Thyroid gland (tissue), 4 donors: ENCODE measurements at regions of chr13 and their contacts with region 1.

Region 1: GRCh38 chr13:110915057-110915873 is at the start of gene ANKRD10:
- DNase-seq: peak; percentile 99
- H3K4me3 ChIP-seq: peak within 1 kb of the TSS; percentile 89 to 100 (median 95)
- H3K27ac ChIP-seq: peak within 1 kb of the TSS; percentile 98 to 99 (median 99)
- H3K4me1 ChIP-seq: peaks cover 14 to 32% of the 10 kb centered on the region in 2 donors
- H3K27me3 ChIP-seq: no peaks in the 10 kb centered on the region
- CTCF ChIP-seq: peak; percentile 68 to 94 (median 88)
- POLR2A ChIP-seq: peak in 1 of 2 donors; percentile 62
- total RNA-seq, gene ANKRD10: 105 to 168 (median 135) TPM

Region 2: GRCh38 chr13:110715395-110716235 is 199.7 kb before region 1 on chr13:
- intact Hi-C with region 1: loop called (anchors 10 kb)
- DNase-seq: peak; percentile 99
- H3K4me3 ChIP-seq: peak overlapping the region; percentile 59 to 83 (median 79)
- H3K27ac ChIP-seq: peak overlapping the region; percentile 97 to 100 (median 99)
- H3K4me1 ChIP-seq: peaks cover 17 to 18% of the 10 kb centered on the region in 2 donors
- H3K27me3 ChIP-seq: no peaks in the 10 kb centered on the region
- CTCF ChIP-seq: peak in 2 of 6 experiments; percentile 2 to 26
- POLR2A ChIP-seq: peak; percentile 25 to 53

Region 3: DNA sequence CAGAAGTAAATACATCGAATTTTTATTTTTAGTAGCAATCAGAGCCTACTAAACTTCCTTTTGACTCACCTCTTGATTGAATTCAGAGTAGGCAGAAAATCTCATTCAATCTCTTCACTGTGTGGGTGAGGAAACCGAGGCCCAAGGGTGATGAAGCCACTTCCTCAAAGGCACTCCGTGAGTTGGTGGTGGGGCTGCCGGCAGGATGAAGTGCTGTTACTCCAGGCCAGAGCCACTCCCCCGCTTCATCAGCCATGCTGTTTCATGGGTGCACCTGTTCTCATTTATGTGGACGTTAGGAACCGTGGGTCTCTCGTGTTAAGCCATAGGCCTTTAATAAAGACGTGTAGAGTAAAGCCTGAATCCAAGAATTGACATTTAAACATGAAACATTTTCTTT is 188.5 kb before region 1 on chr13:
- intact Hi-C with region 1: no loop called
- DNase-seq: no peak
- H3K4me3 ChIP-seq: no peak overlapping the region
- H3K27ac ChIP-seq: no peak overlapping the region
- H3K4me1 ChIP-seq: peaks cover 0 to 11% of the 10 kb centered on the region in 2 donors
- H3K27me3 ChIP-seq: no peaks in the 10 kb centered on the region
- CTCF ChIP-seq: no peak
- POLR2A ChIP-seq: no peak

Region 4: GRCh38 chr13:110874508-110874960 is 40.7 kb before region 1 on chr13:
- intact Hi-C with region 1: loop called (anchors 5 kb)
- DNase-seq: peak; percentile 81 to 84
- H3K4me3 ChIP-seq: peak overlapping the region in 1 of 3 donors; percentile 10
- H3K27ac ChIP-seq: no peak overlapping the region
- H3K4me1 ChIP-seq: peaks cover 13 to 28% of the 10 kb centered on the region in 2 donors
- H3K27me3 ChIP-seq: no peaks in the 10 kb centered on the region
- CTCF ChIP-seq: no peak
- POLR2A ChIP-seq: no peak

Region 5: GRCh38 chr13:111006506-111007031 is 91.3 kb after region 1 on chr13:
- intact Hi-C with region 1: no loop called
- DNase-seq: peak; percentile 63 to 67
- H3K4me3 ChIP-seq: no peak overlapping the region
- H3K27ac ChIP-seq: peak overlapping the region; percentile 43 to 81 (median 72)
- H3K4me1 ChIP-seq: peaks cover 0 to 11% of the 10 kb centered on the region in 2 donors
- H3K27me3 ChIP-seq: no peaks in the 10 kb centered on the region
- CTCF ChIP-seq: no peak
- POLR2A ChIP-seq: no peak